Tibial artery (tissue), 4 donors: ENCODE measurements at regions of chr1 and their contacts with region 1.

Region 1: DNA sequence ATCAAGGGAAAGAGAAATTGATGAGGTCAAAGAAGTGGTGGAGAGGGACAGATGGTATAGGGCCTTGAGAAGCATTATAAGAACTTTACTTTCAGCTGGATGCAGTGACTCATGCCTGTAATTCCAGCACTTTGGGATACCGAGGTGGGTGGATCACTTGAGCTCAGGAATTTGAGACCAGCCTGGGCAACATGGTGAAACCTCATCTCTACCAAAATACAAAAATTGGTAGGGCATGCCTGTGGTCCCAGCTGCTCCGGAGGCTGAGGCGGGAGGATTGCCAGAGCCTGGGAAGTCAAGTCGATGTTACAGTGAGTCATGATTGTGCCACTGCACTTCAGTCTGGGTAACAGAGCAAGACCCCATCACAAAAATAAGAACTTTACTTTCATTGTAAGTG is 5.7 kb downstream of the TMEM50A start:
- DNase-seq: no peak
- H3K4me3 ChIP-seq: no peak overlapping the region
- H3K27ac ChIP-seq: no peak overlapping the region
- H3K4me1 ChIP-seq: peaks cover 0 to 41% (median 17%) of the 10 kb centered on the region in 4 donors
- H3K27me3 ChIP-seq: no peaks in the 10 kb centered on the region
- CTCF ChIP-seq: no peak

Region 2: DNA sequence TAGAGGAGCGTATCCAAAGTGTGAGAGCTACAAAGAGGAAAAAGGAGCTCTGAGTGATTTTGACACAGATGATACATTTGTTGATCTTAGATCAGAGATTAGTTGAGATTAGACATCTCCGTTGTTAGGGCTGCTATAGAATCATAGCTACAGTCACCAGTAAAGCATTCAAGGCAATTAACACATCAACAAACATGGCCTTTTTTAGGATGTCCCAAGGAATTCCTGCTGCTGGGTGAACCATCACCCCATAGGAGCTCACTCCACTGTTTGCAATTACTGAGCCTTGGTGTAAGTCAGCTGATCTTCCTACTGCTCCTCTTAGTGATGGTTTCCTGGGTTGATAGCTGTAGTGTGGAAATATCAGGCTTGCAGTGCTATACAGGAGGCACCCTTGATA is 90.0 kb before region 1 on chr1:
- intact Hi-C with region 1: loop called (anchors 5 kb)
- DNase-seq: no peak
- H3K4me3 ChIP-seq: no peak overlapping the region
- H3K27ac ChIP-seq: no peak overlapping the region
- H3K4me1 ChIP-seq: peaks cover 0 to 25% (median 7%) of the 10 kb centered on the region in 4 donors
- H3K27me3 ChIP-seq: no peaks in the 10 kb centered on the region
- CTCF ChIP-seq: no peak

Region 3: DNA sequence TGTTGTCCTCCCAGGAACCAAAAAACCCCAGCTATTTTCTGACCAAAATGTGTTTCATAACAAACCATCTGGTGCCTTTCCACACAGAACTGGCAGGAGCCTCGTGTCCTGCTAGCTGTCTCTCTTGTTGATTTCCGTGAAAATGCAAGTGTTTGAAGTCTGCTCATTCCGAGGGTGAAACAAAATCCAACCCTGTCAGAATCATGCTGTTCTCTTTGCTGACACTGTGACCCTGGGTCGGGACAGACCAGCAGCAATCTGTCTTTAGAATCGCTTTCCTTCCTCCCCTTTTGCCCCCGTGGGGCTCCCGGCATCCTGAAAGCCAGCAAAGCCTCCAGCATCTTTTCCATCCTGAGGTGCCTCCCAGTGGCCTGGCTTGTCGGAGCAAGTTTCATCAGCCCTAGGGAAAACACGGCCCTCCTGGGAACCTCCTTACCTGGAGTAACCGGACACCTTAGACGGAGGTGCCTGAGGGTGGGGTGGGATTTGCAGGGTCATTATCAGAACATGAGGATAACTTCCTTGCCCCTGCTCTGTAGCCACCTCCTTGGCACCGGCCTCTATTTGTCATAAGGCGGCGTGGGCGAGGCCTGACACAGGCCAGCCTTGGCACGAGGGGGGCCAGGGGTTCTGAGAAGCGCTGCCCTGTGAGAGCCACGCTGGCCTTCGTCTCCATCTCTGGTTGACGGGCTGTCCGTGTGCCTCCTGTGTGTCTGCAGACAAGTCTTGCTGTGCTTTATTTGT is 224.4 kb after region 1 on chr1:
- intact Hi-C with region 1: no loop called
- DNase-seq: peak; percentile 67 to 78
- H3K4me3 ChIP-seq: no peak overlapping the region
- H3K27ac ChIP-seq: peak overlapping the region; percentile 88 to 90
- H3K4me1 ChIP-seq: peaks cover 5 to 61% (median 37%) of the 10 kb centered on the region in 4 donors
- H3K27me3 ChIP-seq: no peaks in the 10 kb centered on the region
- CTCF ChIP-seq: peak in 1 of 2 experiments; percentile 15